ENCODE measurements at regions of chr19 and their contacts with region 1.

Region 1: GRCh38 chr19:44808463-44809371 is at the start of gene BCAM:
- DNase-seq: peak; percentile 90
- total RNA-seq, gene BCAM: 86.8 TPM

Region 2: DNA sequence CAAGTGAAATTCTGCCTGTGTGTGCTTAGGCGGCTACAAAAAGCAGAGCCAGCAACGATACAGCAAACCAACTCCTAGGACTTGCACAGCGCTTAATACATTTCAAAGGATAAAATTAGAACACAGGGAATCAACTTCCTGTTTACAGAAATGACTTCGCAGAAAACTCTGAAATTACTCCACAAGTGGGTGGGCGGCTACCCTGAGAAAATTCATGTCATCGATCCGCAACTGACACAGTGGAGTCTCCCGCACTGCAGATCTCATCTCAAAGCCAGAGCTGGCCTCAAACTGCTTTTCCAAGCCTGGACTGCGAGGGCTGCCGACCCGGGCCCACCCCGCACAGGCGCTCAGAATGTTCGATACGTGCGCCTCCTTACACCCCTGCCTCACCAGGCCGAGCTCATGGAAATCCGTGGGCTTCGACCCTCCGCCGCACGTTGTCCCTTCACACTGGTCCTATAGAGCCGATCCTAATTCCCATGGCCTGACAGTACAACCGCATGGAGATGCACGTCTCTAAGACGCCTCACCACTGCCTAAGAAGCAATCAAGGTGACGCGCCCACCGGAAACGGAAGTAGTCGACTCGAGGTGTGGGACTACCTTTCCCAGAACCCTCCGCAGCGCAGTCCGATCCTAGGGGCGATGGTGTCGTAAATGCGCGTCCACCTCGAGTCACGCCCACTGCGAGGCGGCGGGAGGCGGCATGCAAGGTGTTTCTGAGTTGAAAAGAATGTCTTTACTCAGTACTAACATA is 360.6 kb before region 1 on chr19 and contains the start of gene ZNF229:
- intact Hi-C with region 1: no loop called
- DNase-seq: peak; percentile 94
- total RNA-seq, gene ZNF229: 7.1 TPM

Region 3: GRCh38 chr19:44752816-44753618 is 55.7 kb before region 1 on chr19:
- intact Hi-C with region 1: no loop called
- DNase-seq: peak; percentile 99

Region 4: DNA sequence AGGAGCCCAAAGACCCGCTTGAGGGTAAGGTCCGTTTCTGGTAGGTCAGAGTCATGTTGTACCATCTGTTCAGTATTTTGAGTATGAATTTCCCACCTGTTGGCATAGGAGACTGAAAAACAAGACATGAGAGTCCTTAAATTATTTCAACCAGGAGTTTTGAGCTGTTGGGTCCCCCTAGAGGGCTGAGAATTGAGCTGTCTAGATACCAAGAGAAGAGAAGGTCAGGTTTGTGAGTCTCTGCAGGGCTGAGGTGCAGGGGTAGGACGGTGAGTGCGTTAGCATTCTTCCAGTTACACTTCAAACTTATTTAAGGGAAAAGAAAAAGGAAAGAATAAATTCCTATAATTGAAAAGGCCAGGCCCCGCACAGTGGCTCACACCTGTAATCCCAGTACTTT is 26.0 kb before region 1 on chr19:
- intact Hi-C with region 1: loop called (anchors 2 kb)
- DNase-seq: no peak

Region 5: DNA sequence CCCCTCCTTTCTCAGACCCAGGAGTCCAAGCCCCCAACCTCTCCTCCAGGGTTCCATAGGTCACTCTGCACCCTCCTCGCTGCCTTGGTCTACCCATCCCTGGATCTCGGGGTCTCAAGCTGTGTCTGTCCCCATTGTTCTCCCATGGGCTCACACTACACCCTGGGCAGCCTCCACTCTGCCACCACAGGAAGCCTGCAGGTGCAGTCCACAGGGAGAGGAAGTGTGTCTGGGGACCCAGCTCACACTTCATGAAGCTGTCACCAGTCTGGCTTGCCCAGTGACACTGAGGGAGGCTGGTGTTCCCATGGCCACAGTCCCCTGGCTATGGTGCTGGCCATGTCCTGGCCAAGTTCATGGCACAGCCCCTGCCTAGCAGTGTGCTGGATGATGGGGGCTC is 42.7 kb after region 1 on chr19:
- intact Hi-C with region 1: no loop called
- DNase-seq: no peak

Measured in cardiac septum (tissue), 1 donor.